Spleen (tissue), 13 donors: ENCODE measurements at regions of chr6 and their contacts with region 1.

Region 1: GRCh38 chr6:18323935-18324705 is 59.8 kb upstream of the DEK start:
- DNase-seq: no peak
- H3K4me3 ChIP-seq: no peak overlapping the region
- H3K27ac ChIP-seq: no peak overlapping the region
- H3K4me1 ChIP-seq: peaks cover 0 to 27% (median 8%) of the 10 kb centered on the region in 6 donors
- H3K27me3 ChIP-seq: no peaks in the 10 kb centered on the region
- CTCF ChIP-seq: peak; percentile 53 to 84 (median 75)
- POLR2A ChIP-seq: no peak

Region 2: DNA sequence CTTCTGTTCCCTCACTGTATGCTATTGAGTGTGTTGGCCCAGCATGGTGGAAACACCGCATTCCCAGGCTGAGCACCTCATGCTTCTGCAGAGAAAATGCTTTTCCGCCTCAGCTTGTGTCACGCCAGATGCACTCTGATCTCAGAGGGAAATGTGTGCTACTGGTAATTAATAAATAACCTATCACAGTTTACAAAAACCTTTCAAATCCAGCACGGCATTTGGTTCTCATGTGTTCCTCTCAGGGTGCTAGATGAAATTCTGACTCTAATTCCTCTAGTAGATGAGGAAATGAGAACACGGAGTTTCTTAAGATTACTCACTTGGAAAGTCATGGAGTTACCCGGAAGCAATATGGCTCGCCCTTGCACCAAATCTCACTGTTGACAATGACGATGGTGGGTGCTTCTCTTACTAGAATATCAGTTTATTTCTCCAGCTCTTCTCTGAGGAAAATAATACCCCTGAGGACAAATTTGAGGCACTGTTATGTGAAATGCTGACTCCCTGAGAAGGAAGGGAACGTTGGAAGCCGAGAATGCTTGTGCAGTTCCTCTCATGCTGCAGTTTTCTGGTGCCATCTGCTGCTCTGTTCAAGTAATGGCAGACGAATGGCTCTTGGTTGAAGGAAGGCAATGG is 179.6 kb after region 1 on chr6:
- intact Hi-C with region 1: loop called (anchors 2 kb)
- DNase-seq: no peak
- H3K4me3 ChIP-seq: peak overlapping the region in 3 of 8 donors; percentile 11 to 53 (median 18)
- H3K27ac ChIP-seq: peak overlapping the region in 3 of 8 donors; percentile 10 to 59 (median 52)
- H3K4me1 ChIP-seq: peaks cover 0 to 27% (median 14%) of the 10 kb centered on the region in 6 donors
- H3K27me3 ChIP-seq: no peaks in the 10 kb centered on the region
- CTCF ChIP-seq: peak; percentile 60 to 88 (median 81)
- POLR2A ChIP-seq: no peak